ENCODE measurements at regions of chr12 and their contacts with region 1.

Region 1: GRCh38 chr12:26119391-26119981 is 5.4 kb downstream of the BHLHE41 start:
- DNase-seq: peak; percentile 67
- H3K4me3 ChIP-seq: no peak overlapping the region
- H3K27ac ChIP-seq: no peak overlapping the region
- H3K4me1 ChIP-seq: peaks cover 20% of the 10 kb centered on the region
- H3K27me3 ChIP-seq: peaks cover 11 to 18% of the 10 kb centered on the region in 2 experiments
- CTCF ChIP-seq: peak; percentile 44 to 49
- POLR2A ChIP-seq: no peak

Region 2: GRCh38 chr12:26097046-26097878 is 22.2 kb before region 1 on chr12:
- CTCF ChIA-PET with region 1: interaction called, 16 read pairs
- POLR2A ChIA-PET with region 1: no interaction called
- dilution Hi-C with region 1: no loop called
- intact Hi-C with region 1: no loop called
- DNase-seq: peak; percentile 76
- H3K4me3 ChIP-seq: no peak overlapping the region
- H3K27ac ChIP-seq: no peak overlapping the region
- H3K4me1 ChIP-seq: no peaks in the 10 kb centered on the region
- H3K27me3 ChIP-seq: no peaks in the 10 kb centered on the region
- CTCF ChIP-seq: peak; percentile 88 to 89
- POLR2A ChIP-seq: no peak

Region 3: GRCh38 chr12:26274441-26275312 is 155.2 kb after region 1 on chr12:
- CTCF ChIA-PET with region 1: interaction called, 16 read pairs
- POLR2A ChIA-PET with region 1: no interaction called
- dilution Hi-C with region 1: no loop called
- intact Hi-C with region 1: loop called (anchors 1 kb)
- DNase-seq: peak; percentile 98
- H3K4me3 ChIP-seq: no peak overlapping the region
- H3K27ac ChIP-seq: peak overlapping the region; percentile 93
- H3K4me1 ChIP-seq: peaks cover 34% of the 10 kb centered on the region
- H3K27me3 ChIP-seq: no peaks in the 10 kb centered on the region
- CTCF ChIP-seq: no peak
- POLR2A ChIP-seq: peak; percentile 57

Region 4: DNA sequence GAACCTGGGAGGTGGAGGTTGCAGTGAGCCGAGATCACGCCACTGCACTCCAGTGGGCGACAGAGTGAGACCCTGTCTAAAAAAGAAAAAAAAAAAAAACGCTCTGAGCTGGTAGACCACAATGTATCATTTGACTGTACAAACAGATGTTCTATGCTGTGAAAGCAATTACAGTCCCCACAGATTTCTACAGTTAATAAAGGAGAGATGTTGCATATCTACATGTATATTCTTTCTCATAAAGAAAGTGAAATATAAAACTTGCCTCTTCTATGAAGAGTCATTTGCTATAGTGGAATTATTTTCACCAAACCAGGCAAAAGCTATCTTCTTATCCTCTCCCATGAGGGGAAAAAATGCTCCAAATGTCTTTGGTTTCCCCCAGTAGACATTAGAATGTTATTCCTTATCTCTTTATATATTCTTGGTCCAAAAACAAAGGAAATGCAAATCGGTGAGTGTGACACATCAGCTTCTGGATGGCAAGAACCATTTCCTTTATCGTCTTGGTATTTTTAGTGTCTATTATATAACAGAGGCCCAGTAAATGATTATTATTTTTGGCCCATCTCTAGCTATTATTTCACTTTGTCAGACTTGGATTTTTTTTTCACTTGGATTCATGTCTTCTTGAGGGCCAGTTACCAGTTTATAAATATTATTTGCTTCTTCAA is 306.2 kb after region 1 on chr12:
- CTCF ChIA-PET with region 1: interaction called, 13 read pairs
- POLR2A ChIA-PET with region 1: no interaction called
- dilution Hi-C with region 1: no loop called
- intact Hi-C with region 1: no loop called
- DNase-seq: peak; percentile 66
- H3K4me3 ChIP-seq: no peak overlapping the region
- H3K27ac ChIP-seq: no peak overlapping the region
- H3K4me1 ChIP-seq: peaks cover 11% of the 10 kb centered on the region
- H3K27me3 ChIP-seq: no peaks in the 10 kb centered on the region
- CTCF ChIP-seq: no peak
- POLR2A ChIP-seq: no peak

Region 5: DNA sequence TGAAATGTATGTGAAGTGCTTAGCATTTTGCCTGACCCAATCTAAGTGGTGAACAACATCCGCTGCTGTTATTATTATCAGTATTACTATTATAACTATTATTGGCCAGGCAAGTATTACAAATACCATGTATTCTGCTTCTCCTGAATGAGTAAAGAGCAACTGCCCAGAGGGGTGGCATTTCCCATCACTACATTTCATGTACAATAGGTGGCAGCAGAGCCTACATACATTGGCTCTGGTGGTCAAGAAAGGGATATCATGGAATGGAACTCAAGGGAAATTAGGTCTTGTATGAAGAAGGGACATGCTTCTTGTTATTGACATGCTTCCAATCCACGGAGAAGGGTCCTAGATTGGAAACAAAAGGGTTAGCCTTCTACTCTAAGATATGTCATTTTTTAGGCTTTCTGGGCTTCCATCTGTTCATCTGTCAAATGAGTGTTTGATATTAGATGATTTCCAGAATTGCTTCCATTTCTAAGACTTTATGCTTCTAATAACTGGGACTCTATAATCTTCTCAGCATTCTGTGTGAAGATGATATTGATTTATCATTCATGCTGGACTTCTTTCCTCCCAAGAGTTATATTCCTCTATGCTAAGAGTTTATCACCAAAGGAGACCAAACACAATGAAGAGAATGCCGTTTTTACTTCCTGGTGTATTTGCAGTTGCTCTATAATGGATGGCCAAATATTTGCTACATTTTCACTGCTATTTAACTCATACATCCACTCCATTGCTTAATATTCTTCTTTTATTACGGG is 315.0 kb after region 1 on chr12:
- CTCF ChIA-PET with region 1: interaction called, 10 read pairs
- POLR2A ChIA-PET with region 1: no interaction called
- dilution Hi-C with region 1: no loop called
- intact Hi-C with region 1: loop called (anchors 2 kb)
- DNase-seq: peak; percentile 69
- H3K4me3 ChIP-seq: no peak overlapping the region
- H3K27ac ChIP-seq: no peak overlapping the region
- H3K4me1 ChIP-seq: no peaks in the 10 kb centered on the region
- H3K27me3 ChIP-seq: no peaks in the 10 kb centered on the region
- CTCF ChIP-seq: peak; percentile 62 to 73
- POLR2A ChIP-seq: no peak

Region 6: GRCh38 chr12:26614020-26614616 is 494.6 kb after region 1 on chr12:
- CTCF ChIA-PET with region 1: interaction called, 48 read pairs
- POLR2A ChIA-PET with region 1: no interaction called
- dilution Hi-C with region 1: no loop called
- intact Hi-C with region 1: loop called (anchors 1 kb)
- DNase-seq: peak; percentile 39
- H3K4me3 ChIP-seq: no peak overlapping the region
- H3K27ac ChIP-seq: no peak overlapping the region
- H3K4me1 ChIP-seq: no peaks in the 10 kb centered on the region
- H3K27me3 ChIP-seq: no peaks in the 10 kb centered on the region
- CTCF ChIP-seq: peak; percentile 50 to 52
- POLR2A ChIP-seq: no peak

Region 7: GRCh38 chr12:26629864-26630263 is 510.4 kb after region 1 on chr12:
- CTCF ChIA-PET with region 1: interaction called, 10 read pairs
- POLR2A ChIA-PET with region 1: no interaction called
- dilution Hi-C with region 1: no loop called
- intact Hi-C with region 1: no loop called
- DNase-seq: peak; percentile 61
- H3K4me3 ChIP-seq: peak overlapping the region in 1 of 3 experiments; percentile 31
- H3K27ac ChIP-seq: peak overlapping the region; percentile 78
- H3K4me1 ChIP-seq: peaks cover 32% of the 10 kb centered on the region
- H3K27me3 ChIP-seq: no peaks in the 10 kb centered on the region
- CTCF ChIP-seq: peak; percentile 27 to 32
- POLR2A ChIP-seq: no peak